CD4-positive, alpha-beta T cell (primary cell): ENCODE measurements at regions of chr6 and their contacts with region 1.

Region 1: DNA sequence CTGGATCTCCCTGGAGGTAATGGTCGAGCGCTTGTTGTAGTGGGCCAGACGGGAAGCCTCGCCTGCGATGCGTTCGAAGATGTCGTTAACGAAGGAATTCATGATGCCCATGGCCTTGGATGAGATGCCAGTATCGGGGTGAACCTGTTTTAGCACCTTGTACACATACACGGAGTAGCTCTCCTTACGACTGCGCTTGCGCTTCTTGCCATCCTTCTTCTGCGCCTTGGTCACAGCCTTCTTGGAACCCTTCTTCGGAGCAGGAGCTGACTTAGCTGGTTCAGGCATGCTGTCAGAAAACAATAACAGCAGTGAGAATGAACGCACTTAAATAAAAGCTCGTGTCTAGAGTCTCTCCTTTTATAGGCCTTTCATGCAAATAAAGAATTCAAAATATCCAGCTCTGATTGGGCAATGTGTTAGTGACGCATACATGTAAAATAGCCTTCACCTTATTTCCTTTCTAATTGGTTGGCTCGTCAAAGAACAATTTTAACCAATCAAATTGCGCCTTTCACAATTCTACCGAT is 129.2 kb downstream of the HFE start:
- DNase-seq: peak; percentile 52 to 98 (median 71)
- ATAC-seq: peak; percentile 80
- H3K4me3 ChIP-seq: peak overlapping the region; percentile 76
- H3K4me3 Mint-ChIP-seq: no peak overlapping the region
- H3K27ac ChIP-seq: peak overlapping the region; percentile 87 to 88
- H3K27ac Mint-ChIP-seq: no peak overlapping the region
- H3K4me1 ChIP-seq: peaks cover 33% of the 10 kb centered on the region
- H3K4me1 Mint-ChIP-seq: no peaks in the 10 kb centered on the region
- H3K27me3 ChIP-seq: no peaks in the 10 kb centered on the region
- H3K27me3 Mint-ChIP-seq: no peaks in the 10 kb centered on the region
- CTCF ChIP-seq: no peak

Region 2: DNA sequence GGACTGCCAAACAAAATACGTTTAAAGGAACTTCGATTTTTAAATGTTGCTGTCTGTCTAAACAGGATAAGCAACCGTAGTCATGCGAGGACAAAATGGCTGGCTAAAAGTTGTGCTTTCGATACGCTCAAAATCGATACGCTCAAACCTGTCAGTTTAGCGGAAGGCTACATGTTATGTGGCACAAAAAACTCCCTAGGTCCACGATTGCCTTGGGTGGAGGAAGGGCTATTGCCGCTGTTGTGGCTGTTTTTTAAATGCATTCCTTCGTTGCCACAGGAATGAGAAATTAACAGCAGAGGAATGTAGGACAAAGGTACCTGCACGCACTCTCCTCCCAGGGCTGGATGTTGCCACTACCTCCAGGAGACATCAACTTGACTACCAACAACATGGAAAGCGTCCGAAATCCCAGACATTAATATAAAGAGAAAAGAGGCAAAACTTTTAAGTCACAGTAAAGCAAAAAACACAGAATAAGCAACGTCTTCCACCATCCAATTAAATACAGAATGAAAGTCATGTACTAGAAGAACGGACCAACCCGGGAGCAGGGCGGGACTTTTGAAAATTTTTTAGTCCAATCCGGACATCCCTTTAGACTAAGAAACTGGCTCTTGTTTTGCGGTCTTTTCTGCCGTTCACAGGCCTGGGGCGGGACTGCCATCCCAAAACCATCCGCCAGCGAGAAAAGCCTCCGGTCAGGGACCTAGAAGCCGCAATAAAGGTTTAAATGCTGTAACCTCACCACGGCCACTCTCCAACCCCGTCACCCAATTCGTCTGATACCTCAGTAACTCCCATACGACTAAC is 161.4 kb before region 1 on chr6:
- CTCF ChIA-PET with region 1: no interaction called
- POLR2A ChIA-PET with region 1: interaction called, 43 read pairs
- intact Hi-C with region 1: no loop called
- DNase-seq: peak; percentile 68 to 97 (median 80)
- ATAC-seq: peak; percentile 71
- H3K4me3 ChIP-seq: peak overlapping the region; percentile 89
- H3K4me3 Mint-ChIP-seq: peak overlapping the region; percentile 97
- H3K27ac ChIP-seq: peak overlapping the region; percentile 81
- H3K27ac Mint-ChIP-seq: peak overlapping the region; percentile 96
- H3K4me1 ChIP-seq: peaks cover 29% of the 10 kb centered on the region
- H3K4me1 Mint-ChIP-seq: peaks cover 28% of the 10 kb centered on the region
- H3K27me3 ChIP-seq: no peaks in the 10 kb centered on the region
- H3K27me3 Mint-ChIP-seq: no peaks in the 10 kb centered on the region
- CTCF ChIP-seq: no peak

Region 3: GRCh38 chr6:26175428-26176181 is 40.8 kb before region 1 on chr6:
- CTCF ChIA-PET with region 1: interaction called, 5 read pairs
- POLR2A ChIA-PET with region 1: interaction called, 141 read pairs
- intact Hi-C with region 1: no loop called
- DNase-seq: peak in 11 of 14 experiments; percentile 13 to 85 (median 54)
- ATAC-seq: no peak
- H3K4me3 ChIP-seq: no peak overlapping the region
- H3K4me3 Mint-ChIP-seq: peak overlapping the region; percentile 83
- H3K27ac ChIP-seq: peak overlapping the region in 1 of 2 donors; percentile 41
- H3K27ac Mint-ChIP-seq: peak overlapping the region; percentile 93
- H3K4me1 ChIP-seq: peaks cover 17% of the 10 kb centered on the region
- H3K4me1 Mint-ChIP-seq: peaks cover 53% of the 10 kb centered on the region
- H3K27me3 ChIP-seq: no peaks in the 10 kb centered on the region
- H3K27me3 Mint-ChIP-seq: no peaks in the 10 kb centered on the region
- CTCF ChIP-seq: peak; percentile 87

Region 4: DNA sequence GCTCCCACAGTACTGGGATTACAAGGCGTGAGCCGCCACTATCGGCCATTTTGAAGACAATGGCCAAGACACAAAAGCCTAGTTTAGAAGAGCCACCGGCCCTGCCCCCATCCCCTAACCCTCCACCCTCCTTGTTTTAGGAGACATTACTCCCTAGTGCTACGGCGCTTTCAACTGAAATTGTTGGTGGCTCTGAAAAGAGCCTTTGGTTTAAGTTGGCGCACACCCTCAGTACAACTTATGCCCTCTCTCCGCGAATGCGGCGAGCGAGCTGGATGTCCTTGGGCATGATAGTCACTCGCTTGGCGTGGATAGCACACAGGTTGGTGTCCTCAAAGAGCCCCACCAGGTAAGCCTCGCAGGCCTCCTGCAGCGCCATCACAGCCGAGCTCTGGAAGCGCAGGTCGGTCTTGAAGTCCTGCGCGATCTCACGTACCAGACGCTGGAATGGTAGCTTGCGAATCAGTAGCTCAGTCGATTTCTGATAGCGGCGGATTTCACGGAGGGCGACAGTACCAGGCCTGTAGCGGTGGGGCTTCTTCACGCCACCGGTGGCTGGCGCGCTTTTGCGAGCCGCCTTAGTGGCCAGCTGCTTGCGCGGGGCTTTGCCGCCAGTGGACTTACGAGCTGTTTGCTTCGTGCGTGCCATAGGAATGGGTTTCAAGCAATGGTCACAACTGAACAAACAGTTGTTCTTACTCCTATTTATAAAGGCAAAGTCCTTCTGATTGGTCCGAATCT is 33.7 kb after region 1 on chr6:
- CTCF ChIA-PET with region 1: interaction called, 23 read pairs
- POLR2A ChIA-PET with region 1: interaction called, 5 read pairs
- intact Hi-C with region 1: loop called (anchors 2 kb)
- DNase-seq: peak; percentile 64 to 93 (median 74)
- ATAC-seq: peak; percentile 78
- H3K4me3 ChIP-seq: peak overlapping the region; percentile 75
- H3K4me3 Mint-ChIP-seq: peak overlapping the region; percentile 97
- H3K27ac ChIP-seq: peak overlapping the region; percentile 72 to 80
- H3K27ac Mint-ChIP-seq: peak overlapping the region; percentile 88
- H3K4me1 ChIP-seq: peaks cover 29% of the 10 kb centered on the region
- H3K4me1 Mint-ChIP-seq: peaks cover 44% of the 10 kb centered on the region
- H3K27me3 ChIP-seq: no peaks in the 10 kb centered on the region
- H3K27me3 Mint-ChIP-seq: no peaks in the 10 kb centered on the region
- CTCF ChIP-seq: no peak

Region 5: GRCh38 chr6:26295691-26296555 is 79.5 kb after region 1 on chr6:
- CTCF ChIA-PET with region 1: no interaction called
- POLR2A ChIA-PET with region 1: no interaction called
- intact Hi-C with region 1: no loop called
- DNase-seq: peak in 1 of 14 experiments; percentile 20
- ATAC-seq: no peak
- H3K4me3 ChIP-seq: no peak overlapping the region
- H3K4me3 Mint-ChIP-seq: peak overlapping the region; percentile 42
- H3K27ac ChIP-seq: no peak overlapping the region
- H3K27ac Mint-ChIP-seq: no peak overlapping the region
- H3K4me1 ChIP-seq: peaks cover 4% of the 10 kb centered on the region
- H3K4me1 Mint-ChIP-seq: peaks cover 4% of the 10 kb centered on the region
- H3K27me3 ChIP-seq: no peaks in the 10 kb centered on the region
- H3K27me3 Mint-ChIP-seq: no peaks in the 10 kb centered on the region
- CTCF ChIP-seq: no peak

Region 6: DNA sequence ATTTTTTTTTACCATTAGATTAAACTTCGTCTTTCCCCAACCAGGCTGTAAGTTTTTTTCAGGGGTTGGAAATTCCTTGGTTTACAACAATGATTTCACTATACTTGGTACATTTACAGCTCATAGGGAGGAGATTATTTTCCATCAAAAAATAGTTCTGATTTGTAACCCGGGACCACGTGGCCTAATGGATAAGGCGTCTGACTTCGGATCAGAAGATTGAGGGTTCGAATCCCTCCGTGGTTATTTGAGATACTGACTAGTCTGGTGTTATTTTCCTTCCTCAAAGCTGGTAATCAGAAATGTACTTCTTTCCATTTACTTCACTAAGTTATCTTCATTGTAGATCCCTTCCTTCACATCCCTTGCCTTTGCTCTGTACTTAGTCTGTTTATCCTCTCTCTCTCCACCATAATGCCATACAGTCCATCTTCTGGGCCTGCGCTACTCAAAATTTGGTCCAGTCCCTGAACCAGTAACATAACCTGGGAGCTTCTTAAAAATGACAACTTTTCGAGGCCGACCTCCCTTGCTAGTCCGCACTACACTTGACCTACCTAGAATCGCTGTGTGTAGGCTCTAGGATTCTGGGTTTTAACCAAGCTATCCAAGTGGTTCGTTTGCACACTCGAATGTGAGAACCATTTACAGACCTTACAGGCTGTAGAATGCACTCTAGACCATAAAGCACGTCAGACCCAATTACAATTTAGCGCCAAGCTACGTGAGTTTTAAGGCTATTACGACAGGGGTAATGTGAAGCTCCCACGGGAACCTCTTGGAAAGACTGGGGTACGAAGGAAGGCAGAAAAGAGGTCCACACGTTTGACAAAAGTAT is 106.4 kb after region 1 on chr6:
- CTCF ChIA-PET with region 1: interaction called, 3 read pairs
- POLR2A ChIA-PET with region 1: interaction called, 28 read pairs
- intact Hi-C with region 1: no loop called
- DNase-seq: peak in 10 of 14 experiments; percentile 20 to 88 (median 52)
- ATAC-seq: peak; percentile 75
- H3K4me3 ChIP-seq: peak overlapping the region; percentile 54
- H3K4me3 Mint-ChIP-seq: peak overlapping the region; percentile 96
- H3K27ac ChIP-seq: no peak overlapping the region
- H3K27ac Mint-ChIP-seq: peak overlapping the region; percentile 93
- H3K4me1 ChIP-seq: peaks cover 23% of the 10 kb centered on the region
- H3K4me1 Mint-ChIP-seq: peaks cover 30% of the 10 kb centered on the region
- H3K27me3 ChIP-seq: no peaks in the 10 kb centered on the region
- H3K27me3 Mint-ChIP-seq: peaks cover 35% of the 10 kb centered on the region
- CTCF ChIP-seq: no peak

Region 7: GRCh38 chr6:27132532-27133280 is 916.3 kb after region 1 on chr6:
- CTCF ChIA-PET with region 1: no interaction called
- POLR2A ChIA-PET with region 1: interaction called, 40 read pairs
- intact Hi-C with region 1: no loop called
- DNase-seq: peak; percentile 80 to 99 (median 88)
- ATAC-seq: peak; percentile 79
- H3K4me3 ChIP-seq: peak overlapping the region; percentile 75
- H3K4me3 Mint-ChIP-seq: no peak overlapping the region
- H3K27ac ChIP-seq: peak overlapping the region; percentile 79 to 81
- H3K27ac Mint-ChIP-seq: no peak overlapping the region
- H3K4me1 ChIP-seq: peaks cover 31% of the 10 kb centered on the region
- H3K4me1 Mint-ChIP-seq: peaks cover 12% of the 10 kb centered on the region
- H3K27me3 ChIP-seq: no peaks in the 10 kb centered on the region
- H3K27me3 Mint-ChIP-seq: no peaks in the 10 kb centered on the region
- CTCF ChIP-seq: no peak

Region 8: GRCh38 chr6:27871924-27872638 is 1655.7 kb after region 1 on chr6:
- CTCF ChIA-PET with region 1: no interaction called
- POLR2A ChIA-PET with region 1: interaction called, 40 read pairs
- intact Hi-C with region 1: no loop called
- DNase-seq: peak; percentile 71 to 97 (median 82)
- ATAC-seq: peak; percentile 75
- H3K4me3 ChIP-seq: peak overlapping the region; percentile 86
- H3K4me3 Mint-ChIP-seq: peak overlapping the region; percentile 93
- H3K27ac ChIP-seq: peak overlapping the region; percentile 89
- H3K27ac Mint-ChIP-seq: peak overlapping the region; percentile 93
- H3K4me1 ChIP-seq: peaks cover 39% of the 10 kb centered on the region
- H3K4me1 Mint-ChIP-seq: peaks cover 41% of the 10 kb centered on the region
- H3K27me3 ChIP-seq: no peaks in the 10 kb centered on the region
- H3K27me3 Mint-ChIP-seq: no peaks in the 10 kb centered on the region
- CTCF ChIP-seq: peak; percentile 43